BJ (cell line): ENCODE measurements at regions of chr9 and their contacts with region 1.

Region 1: DNA sequence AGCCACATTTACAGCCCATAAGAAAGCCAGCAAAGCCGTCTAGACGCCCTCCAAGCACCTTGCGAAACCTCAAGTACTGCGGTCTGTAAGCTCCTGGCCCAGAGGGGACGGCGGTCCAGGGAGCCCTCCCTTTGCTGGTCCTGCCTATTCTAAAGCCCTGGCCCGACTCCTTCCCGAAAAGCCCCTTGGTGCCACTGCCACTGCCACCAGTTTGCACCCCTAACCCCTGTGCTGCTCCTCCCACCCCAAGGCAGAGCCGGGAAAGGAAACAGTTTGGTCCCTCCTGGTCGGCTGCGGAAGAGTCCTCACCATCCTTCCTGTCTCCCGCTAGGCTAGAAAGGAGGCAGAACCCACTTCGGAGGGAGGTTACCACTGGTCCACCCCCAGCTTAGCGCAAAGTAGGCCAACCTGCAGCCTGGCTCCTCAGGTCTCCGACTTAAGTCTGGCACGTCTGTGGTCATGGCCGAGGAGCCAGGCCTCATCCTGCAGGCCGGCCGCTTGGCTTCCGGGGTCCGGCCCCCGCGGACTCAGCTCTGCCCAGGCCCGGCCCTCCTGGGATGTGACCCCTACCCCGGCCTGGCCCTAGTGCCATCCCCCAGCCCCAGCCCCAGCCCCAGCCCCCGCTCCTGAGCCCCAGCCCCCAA is 916 bp downstream of the TOR1A start:
- DNase-seq: no peak
- H3K4me3 ChIP-seq: peak overlapping the region; percentile 96
- H3K27me3 ChIP-seq: no peaks in the 10 kb centered on the region
- CTCF ChIP-seq: no peak

Region 2: DNA sequence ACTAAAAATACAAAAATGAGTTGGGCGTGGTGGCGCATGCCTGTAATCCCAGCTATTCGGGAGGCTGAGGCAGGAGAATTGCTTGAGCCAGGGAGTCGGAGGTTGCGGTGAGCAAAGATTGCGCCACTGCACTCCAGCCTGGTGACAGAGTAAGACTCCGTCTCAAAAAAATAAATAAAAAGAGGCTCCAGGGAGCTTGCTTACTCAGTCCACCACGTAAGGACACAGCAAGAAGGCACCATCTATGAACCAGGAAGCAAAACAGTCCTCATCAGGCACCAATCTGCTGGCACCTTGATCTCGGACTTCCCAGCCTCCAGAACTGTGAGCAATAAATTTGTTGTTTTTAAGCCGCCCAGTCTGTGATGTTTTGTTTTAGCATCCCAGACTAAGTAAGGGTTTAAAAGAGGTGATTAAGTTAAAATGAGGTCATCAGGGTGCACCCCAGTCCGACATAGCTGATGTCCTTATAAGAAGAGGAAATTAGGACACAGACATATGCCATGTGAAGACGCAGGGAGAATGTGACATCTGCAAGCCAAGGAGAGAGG is 248.0 kb before region 1 on chr9:
- CTCF ChIA-PET with region 1: no interaction called
- POLR2A ChIA-PET with region 1: interaction called, 18 read pairs
- DNase-seq: no peak
- H3K4me3 ChIP-seq: no peak overlapping the region
- H3K27me3 ChIP-seq: no peaks in the 10 kb centered on the region
- CTCF ChIP-seq: no peak